Activated CD4-positive, alpha-beta T cell treated with anti-CD3 and anti-CD28 coated beads for 36 hours (primary cell): ENCODE measurements at regions of chr6 and their contacts with region 1.

Region 1: GRCh38 chr6:90444160-90444714 is 142.6 kb downstream of the MAP3K7 start:
- DNase-seq: no peak
- ATAC-seq: peak; percentile 42
- H3K4me3 Mint-ChIP-seq: peak overlapping the region; percentile 20
- H3K27ac Mint-ChIP-seq: peak overlapping the region; percentile 99
- H3K4me1 Mint-ChIP-seq: peaks cover 58% of the 10 kb centered on the region
- H3K27me3 Mint-ChIP-seq: no peaks in the 10 kb centered on the region

Region 2: DNA sequence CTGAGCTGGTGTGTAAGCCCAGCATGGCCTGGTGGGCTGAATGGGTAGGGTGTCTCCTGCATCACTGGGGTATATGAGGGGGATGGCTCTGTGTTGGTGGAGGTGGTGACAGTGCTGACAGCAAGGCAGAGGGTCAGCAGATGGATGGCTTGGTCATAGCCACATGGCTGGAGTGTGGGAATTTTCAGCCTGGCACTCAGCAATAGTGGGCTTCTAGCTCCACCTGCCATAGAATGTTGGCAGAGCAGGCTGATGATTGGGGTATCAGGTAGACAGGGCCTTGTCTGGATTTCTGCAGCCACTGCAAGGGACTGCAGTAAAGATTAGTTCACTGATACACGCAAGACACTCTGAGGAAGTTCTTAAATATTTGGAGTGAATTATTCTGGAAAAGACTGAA is 10.1 kb before region 1 on chr6:
- CTCF ChIA-PET with region 1: interaction called, 12 read pairs
- POLR2A ChIA-PET with region 1: interaction called, 4 read pairs
- intact Hi-C with region 1: no loop called
- DNase-seq: no peak
- ATAC-seq: no peak
- H3K4me3 Mint-ChIP-seq: no peak overlapping the region
- H3K27ac Mint-ChIP-seq: no peak overlapping the region
- H3K4me1 Mint-ChIP-seq: peaks cover 19% of the 10 kb centered on the region
- H3K27me3 Mint-ChIP-seq: no peaks in the 10 kb centered on the region

Region 3: DNA sequence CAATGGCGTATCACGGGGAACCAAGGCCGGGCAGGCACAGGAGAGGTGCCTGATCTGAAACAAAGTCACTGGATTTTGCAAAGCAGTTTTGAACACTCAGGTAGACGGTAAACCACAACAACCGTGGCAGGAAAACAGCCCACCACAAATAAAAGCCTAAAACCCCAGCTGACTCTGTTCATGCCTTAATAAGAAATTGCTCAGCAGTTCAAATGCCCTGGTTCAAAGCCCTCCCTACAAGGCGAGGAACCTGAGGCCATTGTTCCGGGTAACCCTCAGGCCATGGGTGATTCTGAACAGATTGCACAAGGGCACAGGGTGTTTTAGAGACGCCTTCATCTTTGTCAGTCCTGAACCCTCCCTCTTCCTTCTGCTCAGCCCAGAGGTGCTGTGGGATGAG is 28.5 kb after region 1 on chr6:
- CTCF ChIA-PET with region 1: interaction called, 3 read pairs
- POLR2A ChIA-PET with region 1: no interaction called
- intact Hi-C with region 1: loop called in 1 of 2 experiments (anchors 1 kb)
- DNase-seq: peak; percentile 51
- ATAC-seq: peak; percentile 9
- H3K4me3 Mint-ChIP-seq: peak overlapping the region; percentile 58
- H3K27ac Mint-ChIP-seq: peak overlapping the region; percentile 77
- H3K4me1 Mint-ChIP-seq: peaks cover 99% of the 10 kb centered on the region
- H3K27me3 Mint-ChIP-seq: peaks cover 2% of the 10 kb centered on the region

Region 4: DNA sequence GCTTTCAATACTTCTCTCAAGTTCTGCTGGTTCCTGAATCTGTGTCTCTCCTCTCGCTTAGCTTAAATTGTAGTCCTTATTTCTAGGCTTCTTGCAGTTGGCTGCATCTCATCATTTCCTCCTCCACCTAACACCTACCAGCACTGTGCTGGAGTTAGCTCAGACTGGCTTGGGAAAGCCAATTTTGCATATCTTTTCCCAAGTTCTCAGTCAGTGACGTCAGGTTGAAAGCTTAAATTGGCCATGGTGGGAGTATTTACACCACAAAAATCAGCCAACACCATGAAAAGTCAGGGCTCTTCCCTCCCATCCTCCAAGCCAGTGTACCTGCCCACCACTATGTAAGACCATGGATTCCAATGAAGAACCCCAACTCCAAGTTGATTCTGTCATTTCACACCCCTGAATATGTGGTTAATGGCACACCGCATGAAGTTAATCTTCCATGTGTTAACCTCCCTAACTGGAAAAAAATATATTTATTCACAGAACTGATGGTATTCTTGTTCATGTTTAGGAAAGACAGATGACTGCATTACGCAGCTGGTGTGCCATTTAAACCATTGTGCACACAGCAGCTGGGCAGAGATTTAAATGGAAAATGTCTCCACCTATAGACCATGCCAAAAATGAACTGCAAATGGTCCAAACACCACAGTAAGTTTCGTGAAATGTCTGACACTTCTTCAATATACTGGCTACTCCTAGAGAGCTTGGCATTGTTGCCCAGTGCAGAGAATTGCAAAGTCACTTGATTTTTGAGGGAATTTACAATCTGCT is 416.8 kb after region 1 on chr6:
- CTCF ChIA-PET with region 1: no interaction called
- POLR2A ChIA-PET with region 1: no interaction called
- intact Hi-C with region 1: no loop called
- DNase-seq: no peak
- ATAC-seq: peak; percentile 47
- H3K4me3 Mint-ChIP-seq: no peak overlapping the region
- H3K27ac Mint-ChIP-seq: no peak overlapping the region
- H3K4me1 Mint-ChIP-seq: peaks cover 4% of the 10 kb centered on the region
- H3K27me3 Mint-ChIP-seq: peaks cover 10% of the 10 kb centered on the region